PC-3 (cell line): ENCODE measurements at regions of chr10 and their contacts with region 1.

Region 1: DNA sequence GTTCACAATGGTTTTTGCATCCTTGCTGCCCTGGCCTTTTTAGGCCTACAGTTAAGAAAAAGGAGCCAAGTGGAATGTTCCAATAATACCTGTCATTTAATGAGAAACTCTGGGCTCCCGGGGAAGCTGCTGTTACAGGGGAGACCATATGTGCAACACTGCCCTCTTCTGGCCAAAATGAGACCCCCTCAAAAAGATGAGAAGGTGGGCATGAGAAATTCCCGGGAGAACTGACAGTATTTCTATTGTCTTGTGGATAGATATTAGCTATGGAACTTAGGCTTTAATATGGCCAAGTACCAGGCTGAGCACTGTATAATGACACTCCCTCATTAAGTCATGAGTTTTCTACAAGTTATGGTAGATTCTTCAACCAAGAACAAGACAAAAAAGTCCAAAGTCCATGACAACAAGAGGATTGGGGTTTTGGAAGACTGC is 99.4 kb downstream of the CCDC3 start:
- DNase-seq: peak; percentile 53
- ATAC-seq: peak; percentile 40; the same call in 1 of the 2 replicates
- H3K4me3 ChIP-seq: no peak overlapping the region
- H3K27ac ChIP-seq: no peak overlapping the region
- H3K4me1 ChIP-seq: no peaks in the 10 kb centered on the region
- H3K27me3 ChIP-seq: no peaks in the 10 kb centered on the region
- CTCF ChIP-seq: peak; percentile 65

Region 2: GRCh38 chr10:12782537-12782936 is 119.6 kb before region 1 on chr10:
- CTCF ChIA-PET with region 1: no interaction called
- POLR2A ChIA-PET with region 1: no interaction called
- intact Hi-C with region 1: loop called (anchors 2 kb)
- DNase-seq: peak; percentile 39
- ATAC-seq: no peak
- H3K4me3 ChIP-seq: no peak overlapping the region
- H3K27ac ChIP-seq: no peak overlapping the region
- H3K4me1 ChIP-seq: no peaks in the 10 kb centered on the region
- H3K27me3 ChIP-seq: no peaks in the 10 kb centered on the region
- CTCF ChIP-seq: peak; percentile 65

Region 3: DNA sequence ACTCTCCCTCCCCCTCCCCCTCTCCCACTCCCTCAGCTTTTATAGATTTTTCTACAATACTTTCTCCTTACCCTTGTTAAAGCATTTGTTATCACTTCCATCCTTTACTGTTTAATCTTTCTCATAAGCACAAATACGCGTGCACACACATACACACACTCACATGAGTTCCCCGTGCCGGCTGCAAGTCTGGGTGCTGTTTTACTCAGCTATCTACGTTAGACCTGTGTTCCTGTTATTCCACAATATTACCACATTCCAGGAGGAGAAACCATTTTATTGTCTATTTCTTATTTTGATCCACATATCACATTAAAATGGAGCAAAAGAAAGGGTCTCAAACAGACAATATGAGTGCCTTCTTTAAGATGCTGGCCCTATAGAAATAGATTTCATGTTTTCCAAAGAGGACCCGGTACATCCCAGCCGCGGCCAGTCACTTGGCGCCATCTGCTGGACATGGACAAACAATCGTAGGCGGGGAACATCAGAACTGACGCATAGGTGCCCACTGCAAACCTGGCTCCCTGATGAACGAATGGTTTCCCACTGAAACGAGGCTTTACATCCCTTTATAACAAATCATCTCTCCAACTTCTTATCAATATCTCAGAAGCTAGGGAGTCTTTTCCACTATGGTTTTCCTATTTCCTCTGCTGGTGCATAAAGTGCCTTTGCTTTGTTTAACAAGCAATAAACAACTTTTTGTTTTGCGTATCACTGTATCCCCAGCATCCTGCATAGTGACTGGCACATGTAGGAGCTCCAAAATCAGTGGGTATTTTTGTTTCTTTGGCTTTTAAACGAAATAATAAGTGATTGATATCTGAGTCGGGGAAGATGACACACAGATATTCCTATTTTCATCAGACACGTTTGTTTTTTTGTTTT is 172.7 kb after region 1 on chr10:
- CTCF ChIA-PET with region 1: no interaction called
- POLR2A ChIA-PET with region 1: no interaction called
- intact Hi-C with region 1: loop called (anchors 10 kb)
- DNase-seq: peak; percentile 59
- ATAC-seq: peak; percentile 94
- H3K4me3 ChIP-seq: no peak overlapping the region
- H3K27ac ChIP-seq: no peak overlapping the region
- H3K4me1 ChIP-seq: no peaks in the 10 kb centered on the region
- H3K27me3 ChIP-seq: no peaks in the 10 kb centered on the region
- CTCF ChIP-seq: peak; percentile 74